Activated CD4-positive, alpha-beta T cell treated with anti-CD3 and anti-CD28 coated beads for 36 hours (primary cell): ENCODE measurements at regions of chr16 and their contacts with region 1.

Region 1: DNA sequence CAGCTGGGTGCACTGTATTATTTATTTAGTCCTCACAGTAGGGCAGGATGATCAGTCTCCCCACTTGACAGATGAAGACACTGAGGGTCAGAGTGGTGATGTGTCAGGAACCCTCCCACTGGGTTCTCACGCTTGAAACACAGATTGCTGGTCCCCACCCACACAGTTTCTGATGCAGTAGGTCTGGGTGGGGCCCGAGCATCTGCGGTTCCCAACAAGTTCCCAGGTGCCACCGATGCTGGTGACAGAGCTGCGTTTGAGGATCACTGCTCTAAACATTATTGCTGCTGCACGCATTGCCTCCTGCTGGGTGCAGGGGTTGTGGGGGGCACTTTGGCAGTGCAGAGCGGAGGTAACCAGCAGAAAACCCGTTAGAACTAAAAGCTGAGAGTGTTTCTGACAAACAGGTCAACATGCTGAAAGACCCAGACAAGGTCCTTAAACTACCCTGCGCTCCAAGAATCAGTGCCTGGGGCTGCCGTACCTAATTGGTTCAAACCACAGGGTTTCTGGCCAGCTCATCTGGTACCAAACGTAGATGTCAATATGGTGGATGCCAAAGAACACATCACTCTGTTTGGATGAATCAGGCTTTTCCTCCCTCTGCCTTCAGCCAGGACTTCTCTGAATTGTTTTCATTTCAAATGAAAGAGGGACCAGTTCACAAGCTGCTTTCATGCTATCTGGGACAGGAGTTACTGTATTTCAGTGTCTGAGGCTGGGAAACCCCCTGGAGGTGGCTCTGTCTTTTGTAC is 76.0 kb downstream of the ABCC1 start:
- DNase-seq: peak; percentile 78
- ATAC-seq: peak; percentile 91
- H3K4me3 Mint-ChIP-seq: peak overlapping the region; percentile 30
- H3K27ac Mint-ChIP-seq: peak overlapping the region; percentile 78
- H3K4me1 Mint-ChIP-seq: peaks cover 36% of the 10 kb centered on the region
- H3K27me3 Mint-ChIP-seq: no peaks in the 10 kb centered on the region

Region 2: DNA sequence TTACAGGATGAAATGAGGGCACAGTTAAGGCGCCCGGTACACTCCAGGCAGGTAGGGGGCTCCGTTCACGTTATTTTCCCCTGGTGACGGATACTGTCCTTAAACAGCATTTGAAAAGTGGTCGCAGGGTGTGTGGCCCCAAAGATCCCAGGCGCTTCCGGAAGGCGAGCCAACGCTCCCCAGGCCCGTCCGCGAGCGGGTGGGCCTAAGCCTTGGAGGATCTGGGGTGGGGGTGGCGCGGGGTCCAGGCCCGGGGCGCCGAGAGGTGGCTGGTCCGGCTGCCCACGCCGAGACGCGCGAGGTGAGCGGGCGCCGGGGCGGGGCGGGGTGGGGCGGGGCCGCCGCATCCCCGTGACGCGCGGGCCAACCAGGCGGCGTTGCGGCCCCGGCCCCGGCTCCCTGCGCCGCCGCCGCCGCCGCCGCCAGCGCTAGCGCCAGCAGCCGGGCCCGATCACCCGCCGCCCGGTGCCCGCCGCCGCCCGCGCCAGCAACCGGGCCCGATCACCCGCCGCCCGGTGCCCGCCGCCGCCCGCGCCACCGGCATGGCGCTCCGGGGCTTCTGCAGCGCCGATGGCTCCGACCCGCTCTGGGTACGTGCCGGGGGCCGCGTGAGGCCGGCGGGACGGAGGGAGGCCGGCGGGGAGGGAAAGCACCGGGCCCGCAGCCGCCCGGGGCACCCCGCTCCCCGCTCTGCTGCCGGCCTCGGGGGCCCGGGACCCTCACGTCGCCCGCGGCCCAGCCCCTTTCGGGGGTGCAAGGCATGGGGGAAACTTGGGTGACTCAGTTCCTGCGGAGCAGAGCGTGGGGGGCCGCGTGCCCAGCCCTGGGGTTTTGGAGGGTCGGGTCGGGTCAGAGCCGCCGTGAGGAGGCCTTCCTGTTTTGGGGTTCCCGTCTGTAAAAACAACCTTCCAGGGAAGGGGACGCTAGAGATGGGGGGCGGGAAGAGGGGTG is 75.9 kb before region 1 on chr16 and contains the start of gene ABCC1:
- CTCF ChIA-PET with region 1: interaction called, 4 read pairs
- POLR2A ChIA-PET with region 1: no interaction called
- intact Hi-C with region 1: loop called in 1 of 2 experiments (anchors 1 kb)
- DNase-seq: peak; percentile 73
- ATAC-seq: peak; percentile 69
- H3K4me3 Mint-ChIP-seq: peak within 1 kb of the TSS; percentile 95
- H3K27ac Mint-ChIP-seq: peak within 1 kb of the TSS; percentile 100
- H3K4me1 Mint-ChIP-seq: peaks cover 51% of the 10 kb centered on the region
- H3K27me3 Mint-ChIP-seq: no peaks in the 10 kb centered on the region
- total RNA-seq, gene ABCC1: 57.8 to 65.1 TPM

Region 3: DNA sequence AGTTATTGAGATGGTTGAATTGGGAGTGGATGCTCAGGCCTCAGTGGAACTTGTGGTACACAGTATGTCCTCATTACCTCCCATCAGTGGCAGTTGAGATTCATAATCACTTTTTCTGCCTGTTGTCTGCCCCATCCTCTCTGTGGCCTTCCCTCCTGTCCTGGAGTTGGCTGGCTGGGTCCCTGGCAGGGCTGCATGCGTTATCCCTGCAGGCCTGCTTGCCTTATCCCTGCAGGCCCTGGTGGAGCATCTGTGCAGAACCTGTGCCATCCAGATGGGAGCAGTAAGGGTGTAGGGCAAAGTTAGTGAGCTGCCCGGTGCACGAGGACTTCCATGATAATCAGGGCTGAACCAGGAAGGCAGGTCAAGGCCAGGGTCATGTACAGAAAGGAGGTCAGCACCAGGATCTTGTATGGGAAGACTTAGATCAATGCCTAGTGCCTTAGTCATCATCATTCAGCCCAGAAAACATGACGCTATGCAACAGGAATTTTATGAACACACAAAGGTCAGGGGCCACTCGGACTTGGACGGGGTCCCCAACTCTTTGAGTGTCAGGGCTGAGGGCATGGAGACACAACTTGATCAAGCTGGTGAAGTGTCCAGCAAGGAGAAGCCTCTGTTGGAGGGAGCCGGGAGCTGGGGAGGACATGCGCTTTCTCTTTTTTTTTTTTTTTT is 28.8 kb before region 1 on chr16:
- CTCF ChIA-PET with region 1: interaction called, 3 read pairs
- POLR2A ChIA-PET with region 1: no interaction called
- intact Hi-C with region 1: loop called in 1 of 2 experiments (anchors 2 kb)
- DNase-seq: no peak
- ATAC-seq: no peak
- H3K4me3 Mint-ChIP-seq: no peak overlapping the region
- H3K27ac Mint-ChIP-seq: peak overlapping the region; percentile 58
- H3K4me1 Mint-ChIP-seq: peaks cover 35% of the 10 kb centered on the region
- H3K27me3 Mint-ChIP-seq: no peaks in the 10 kb centered on the region